HEK293 (cell line): ENCODE measurements at regions of chr9 and their contacts with region 1.

Region 1: DNA sequence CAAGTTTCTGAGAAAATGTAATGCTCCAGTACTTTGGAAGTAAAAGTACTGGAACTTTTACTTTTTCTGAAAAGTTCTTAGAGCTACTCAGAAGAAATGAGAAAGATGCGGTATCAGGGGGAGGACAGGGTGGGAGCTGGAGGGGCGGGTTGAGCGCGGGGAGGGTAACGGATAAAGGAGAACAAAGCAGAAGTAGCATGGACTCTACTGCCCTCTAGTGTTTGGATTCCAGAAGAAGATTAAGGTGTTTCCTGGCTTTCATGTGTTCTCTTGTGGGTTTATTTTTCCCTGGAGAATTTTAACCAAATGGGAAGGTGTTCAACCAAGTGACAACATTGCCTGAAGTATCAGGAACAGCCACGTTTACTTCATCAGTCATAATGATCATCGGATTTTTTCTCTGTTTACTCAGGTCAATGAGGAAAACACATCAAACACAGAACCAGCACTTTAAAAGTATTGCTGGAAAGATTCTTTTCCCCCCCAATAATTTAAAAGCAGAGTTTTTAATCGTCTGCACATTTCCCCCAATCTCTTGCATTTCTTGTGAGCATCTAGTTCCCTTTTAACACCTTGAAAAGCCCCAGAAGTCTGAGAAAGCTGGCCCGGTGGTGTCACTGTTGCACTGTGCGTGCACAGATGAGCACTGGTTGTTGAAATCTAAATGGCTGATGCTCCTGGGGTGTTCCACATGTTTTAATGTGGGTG is 190.6 kb downstream of the MPDZ start:
- H3K4me3 ChIP-seq: no peak overlapping the region
- H3K27ac ChIP-seq: no peak overlapping the region
- H3K4me1 ChIP-seq: no peaks in the 10 kb centered on the region
- CTCF ChIP-seq: 0 out of 2 replicates have a peak, but pooled peaks have one; percentile 22

Region 2: DNA sequence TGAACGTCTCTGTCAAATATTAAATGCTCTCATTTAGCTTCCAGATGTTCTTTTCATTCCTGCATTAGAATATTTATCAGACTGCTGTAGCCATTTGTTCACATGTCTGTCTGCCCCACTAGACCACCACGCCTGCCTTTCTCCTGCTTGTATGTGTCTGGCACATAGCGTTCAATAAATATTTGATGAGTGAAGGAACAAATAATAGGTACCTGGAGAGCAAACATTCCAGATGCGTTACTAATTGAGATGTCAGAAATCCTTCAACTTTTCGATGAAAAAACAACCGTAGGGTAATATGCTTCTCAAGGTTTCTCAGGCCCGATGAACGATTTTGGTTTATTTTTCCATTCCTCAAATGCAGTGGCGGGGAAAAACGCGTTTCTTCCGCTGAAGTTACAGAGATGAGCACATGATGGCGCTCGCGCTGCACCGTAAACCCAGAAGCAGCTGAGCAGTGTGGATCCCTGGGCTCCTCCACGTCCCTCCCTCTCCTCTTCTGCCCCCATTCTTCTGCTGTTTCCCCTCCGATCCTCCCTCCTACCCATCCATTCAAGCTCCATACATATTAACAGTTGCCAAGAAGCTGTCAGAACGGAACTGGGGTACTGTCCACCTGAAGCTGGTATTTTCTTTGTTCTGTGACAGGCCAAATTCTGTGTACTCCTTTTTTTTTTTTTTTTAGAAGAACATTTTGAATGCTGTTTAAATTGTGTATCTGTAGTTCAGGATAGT is 54.7 kb before region 1 on chr9:
- CTCF ChIA-PET with region 1: interaction called, 84 read pairs
- POLR2A ChIA-PET with region 1: no interaction called
- H3K4me3 ChIP-seq: no peak overlapping the region; the same call in 1 of the 2 replicates
- H3K27ac ChIP-seq: no peak overlapping the region
- H3K4me1 ChIP-seq: no peaks in the 10 kb centered on the region
- CTCF ChIP-seq: peak; percentile 74

Region 3: DNA sequence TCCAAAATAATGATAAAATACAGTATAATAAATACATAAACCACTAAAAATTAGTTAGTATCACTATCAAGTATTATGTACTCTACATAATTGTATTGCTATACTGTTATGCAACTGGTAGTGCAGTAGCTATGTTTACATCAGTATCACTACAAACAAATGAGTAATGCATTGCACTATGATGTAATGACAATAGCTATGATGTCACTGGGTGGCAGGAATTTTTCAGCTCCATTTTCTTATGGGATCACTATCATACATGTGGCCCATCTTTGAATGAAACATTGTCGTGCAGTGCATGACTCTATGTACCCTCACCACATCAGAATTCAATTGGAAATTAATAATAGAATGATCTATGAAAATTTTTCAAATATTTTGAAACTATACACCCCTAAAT is 10.7 kb before region 1 on chr9:
- CTCF ChIA-PET with region 1: interaction called, 16 read pairs
- POLR2A ChIA-PET with region 1: no interaction called
- H3K4me3 ChIP-seq: no peak overlapping the region
- H3K27ac ChIP-seq: no peak overlapping the region
- H3K4me1 ChIP-seq: no peaks in the 10 kb centered on the region
- CTCF ChIP-seq: no peak

Region 4: GRCh38 chr9:13100914-13101572 is 12.2 kb after region 1 on chr9:
- CTCF ChIA-PET with region 1: interaction called, 10 read pairs
- POLR2A ChIA-PET with region 1: no interaction called
- H3K4me3 ChIP-seq: no peak overlapping the region
- H3K27ac ChIP-seq: no peak overlapping the region
- H3K4me1 ChIP-seq: no peaks in the 10 kb centered on the region
- CTCF ChIP-seq: no peak

Region 5: DNA sequence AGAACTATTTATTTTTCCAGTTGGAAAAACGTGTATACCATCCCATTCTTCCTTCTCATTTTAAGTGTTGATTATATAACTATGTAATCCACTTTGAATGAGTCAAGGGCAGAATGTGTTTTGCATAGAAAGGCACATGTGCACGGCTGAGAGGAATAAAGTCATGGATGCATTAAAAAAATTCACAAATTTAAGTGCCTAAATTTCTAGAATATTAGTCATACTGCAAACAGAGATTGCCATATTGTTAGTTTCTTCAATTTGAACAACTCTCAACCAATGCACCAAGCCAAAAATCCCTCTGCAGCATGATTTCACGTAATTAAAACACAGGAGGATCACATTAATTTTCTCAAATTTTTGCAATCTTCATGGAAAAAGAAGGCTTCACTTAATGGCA is 24.3 kb after region 1 on chr9:
- CTCF ChIA-PET with region 1: no interaction called
- POLR2A ChIA-PET with region 1: no interaction called
- H3K4me3 ChIP-seq: no peak overlapping the region
- H3K27ac ChIP-seq: no peak overlapping the region
- H3K4me1 ChIP-seq: no peaks in the 10 kb centered on the region
- CTCF ChIP-seq: no peak

Region 6: GRCh38 chr9:13386935-13387733 is 298.3 kb after region 1 on chr9:
- CTCF ChIA-PET with region 1: no interaction called
- POLR2A ChIA-PET with region 1: no interaction called
- H3K4me3 ChIP-seq: no peak overlapping the region
- H3K27ac ChIP-seq: no peak overlapping the region
- H3K4me1 ChIP-seq: no peaks in the 10 kb centered on the region
- CTCF ChIP-seq: no peak